ENCODE measurements at regions of chr15 and their contacts with region 1.

Region 1: GRCh38 chr15:56821721-56822425 is 88.6 kb upstream of the ZNF280D start:
- DNase-seq: peak; percentile 38 to 57
- ATAC-seq: peak; percentile 94

Region 2: GRCh38 chr15:56587686-56588085 is 234.2 kb before region 1 on chr15:
- intact Hi-C with region 1: no loop called
- DNase-seq: no peak
- ATAC-seq: no peak

Region 3: GRCh38 chr15:56886932-56887781 is 65.3 kb after region 1 on chr15:
- intact Hi-C with region 1: no loop called
- DNase-seq: peak; percentile 94 to 95
- ATAC-seq: peak; percentile 94

Region 4: GRCh38 chr15:56978900-56979662 is 157.2 kb after region 1 on chr15:
- intact Hi-C with region 1: no loop called
- DNase-seq: no peak
- ATAC-seq: peak; percentile 33

Region 5: GRCh38 chr15:57213862-57214261 is 392.0 kb after region 1 on chr15:
- intact Hi-C with region 1: loop called in 1 of 2 experiments (anchors 10 kb)
- DNase-seq: no peak
- ATAC-seq: peak; percentile 87

Measured in left colon (tissue), 2 donors.